Calu3 (cell line): ENCODE measurements at regions of chr5 and their contacts with region 1.

Region 1: DNA sequence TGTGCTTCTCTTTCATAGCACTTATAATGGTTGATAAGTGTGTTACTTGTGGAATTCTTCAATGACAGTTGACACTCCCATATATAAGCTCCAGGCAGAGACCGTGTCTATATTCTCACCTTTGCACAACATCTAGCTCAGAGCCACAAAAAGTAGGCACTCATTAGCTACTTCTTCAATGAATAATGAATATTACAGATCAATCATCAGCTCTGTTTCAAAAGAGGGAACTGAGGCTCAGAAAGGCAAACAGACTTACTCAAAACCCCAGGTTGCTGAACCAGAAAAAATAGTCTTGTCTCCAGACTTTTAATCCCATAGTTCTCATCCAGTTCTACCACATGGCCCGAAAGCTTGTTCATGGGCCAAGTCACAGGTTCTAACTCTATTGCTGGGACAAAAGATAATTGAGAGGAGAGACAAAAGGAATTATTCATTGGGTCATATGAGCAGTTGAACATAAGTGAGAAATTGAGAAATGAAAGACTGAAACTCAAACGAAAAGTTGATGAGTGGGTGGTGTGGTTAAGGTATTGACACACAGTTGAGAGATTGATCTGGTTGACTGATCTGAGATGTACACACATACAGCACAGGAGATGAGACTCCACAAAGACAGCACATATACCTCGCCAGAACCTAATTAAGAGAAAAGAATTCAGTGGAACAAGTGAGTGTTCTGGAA is 381.6 kb downstream of the EFNA5 start:
- DNase-seq: no peak
- H3K4me3 Mint-ChIP-seq: no peak overlapping the region
- H3K27ac Mint-ChIP-seq: peak overlapping the region; percentile 82
- H3K4me1 Mint-ChIP-seq: peaks cover 77% of the 10 kb centered on the region
- H3K27me3 Mint-ChIP-seq: no peaks in the 10 kb centered on the region
- CTCF ChIP-seq: no peak

Region 2: DNA sequence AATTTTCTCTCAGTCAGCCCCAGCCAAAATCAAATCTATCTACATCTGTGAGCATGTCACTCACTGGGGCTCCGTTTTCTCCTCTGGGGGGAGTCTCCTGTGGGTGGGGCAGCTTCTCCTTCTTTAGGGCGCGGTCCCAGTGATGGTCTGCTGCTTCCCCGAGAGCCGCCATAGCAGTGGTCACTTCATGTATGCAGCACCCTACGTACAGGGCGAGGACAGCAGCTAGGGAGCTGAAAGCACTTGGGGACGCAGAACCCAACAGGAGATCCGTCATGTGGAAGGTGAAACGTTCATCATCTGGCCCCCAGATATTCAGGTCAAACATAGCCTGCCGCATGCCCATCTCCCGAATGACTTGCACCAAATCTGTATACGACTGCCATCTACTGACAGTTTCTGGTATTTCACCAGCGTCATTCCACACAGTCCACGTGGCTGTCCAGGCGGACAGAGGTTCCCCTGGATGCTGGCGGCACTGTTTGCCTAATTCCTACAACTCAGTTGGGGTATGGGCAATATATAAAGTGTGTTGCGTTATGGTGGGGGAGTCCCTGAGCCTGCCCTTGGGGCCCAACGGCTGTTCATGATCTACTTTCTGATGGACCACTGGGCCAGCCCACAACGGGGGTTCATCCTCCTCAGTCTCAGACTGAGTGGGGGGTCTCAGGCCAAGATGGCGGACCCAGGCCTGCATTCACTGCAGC is 413.4 kb before region 1 on chr5:
- CTCF ChIA-PET with region 1: no interaction called
- intact Hi-C with region 1: loop called (anchors 10 kb)
- DNase-seq: peak; percentile 57
- H3K4me3 Mint-ChIP-seq: no peak overlapping the region
- H3K27ac Mint-ChIP-seq: no peak overlapping the region
- H3K4me1 Mint-ChIP-seq: peaks cover 27% of the 10 kb centered on the region
- H3K27me3 Mint-ChIP-seq: no peaks in the 10 kb centered on the region
- CTCF ChIP-seq: peak; percentile 50

Region 3: DNA sequence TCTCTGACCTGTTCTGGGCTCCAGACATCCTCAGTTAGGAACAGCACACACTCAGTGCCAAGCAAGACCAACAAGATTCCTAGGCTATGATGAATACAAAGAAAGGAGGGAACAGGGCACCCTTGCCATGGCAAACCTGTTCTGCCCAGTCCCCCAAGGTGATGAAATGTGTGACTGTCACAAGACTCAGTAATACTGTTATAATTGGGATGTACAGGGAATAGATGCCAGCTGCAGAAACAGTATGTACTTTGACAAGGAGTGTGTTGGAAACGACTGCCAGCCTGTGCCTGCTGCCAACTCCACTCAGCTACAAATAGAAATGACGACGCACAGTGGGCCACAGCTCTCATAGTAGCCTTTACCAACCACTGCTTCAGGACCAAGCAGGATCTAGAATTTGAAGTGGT is 71.4 kb before region 1 on chr5:
- CTCF ChIA-PET with region 1: interaction called, 3 read pairs
- intact Hi-C with region 1: loop called (anchors 5 kb)
- DNase-seq: peak; percentile 86
- H3K4me3 Mint-ChIP-seq: peak overlapping the region; percentile 44
- H3K27ac Mint-ChIP-seq: peak overlapping the region; percentile 91
- H3K4me1 Mint-ChIP-seq: peaks cover 52% of the 10 kb centered on the region
- H3K27me3 Mint-ChIP-seq: no peaks in the 10 kb centered on the region
- CTCF ChIP-seq: no peak

Region 4: GRCh38 chr5:107319901-107320300 is 30.7 kb after region 1 on chr5:
- CTCF ChIA-PET with region 1: no interaction called
- intact Hi-C with region 1: no loop called
- DNase-seq: no peak
- H3K4me3 Mint-ChIP-seq: no peak overlapping the region
- H3K27ac Mint-ChIP-seq: no peak overlapping the region
- H3K4me1 Mint-ChIP-seq: peaks cover 15% of the 10 kb centered on the region
- H3K27me3 Mint-ChIP-seq: no peaks in the 10 kb centered on the region
- CTCF ChIP-seq: no peak

Region 5: DNA sequence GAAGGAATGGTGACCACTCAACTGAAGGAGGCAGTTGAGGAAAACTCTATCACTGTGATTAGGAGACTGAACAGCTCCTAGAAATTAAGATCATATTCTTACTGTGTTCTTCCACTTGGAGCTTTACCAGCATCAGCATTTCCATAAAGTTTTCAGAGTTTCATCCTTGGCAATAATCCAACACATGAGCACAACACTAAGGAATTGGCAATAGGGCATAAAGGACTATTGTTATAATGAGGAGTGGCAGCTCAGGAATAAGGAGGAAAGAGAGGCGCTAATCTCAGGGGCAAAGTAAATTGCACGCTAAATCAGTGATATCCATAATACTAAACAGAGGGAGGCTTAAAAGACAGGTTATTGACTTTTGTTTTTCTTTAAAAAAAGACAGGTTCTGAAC is 42.7 kb after region 1 on chr5:
- CTCF ChIA-PET with region 1: no interaction called
- intact Hi-C with region 1: loop called (anchors 2 kb)
- DNase-seq: peak; percentile 38
- H3K4me3 Mint-ChIP-seq: no peak overlapping the region
- H3K27ac Mint-ChIP-seq: peak overlapping the region; percentile 84
- H3K4me1 Mint-ChIP-seq: peaks cover 23% of the 10 kb centered on the region
- H3K27me3 Mint-ChIP-seq: no peaks in the 10 kb centered on the region
- CTCF ChIP-seq: no peak

Region 6: GRCh38 chr5:107370396-107370968 is 81.3 kb after region 1 on chr5:
- CTCF ChIA-PET with region 1: no interaction called
- intact Hi-C with region 1: no loop called
- DNase-seq: no peak
- H3K4me3 Mint-ChIP-seq: no peak overlapping the region
- H3K27ac Mint-ChIP-seq: no peak overlapping the region
- H3K4me1 Mint-ChIP-seq: peaks cover 24% of the 10 kb centered on the region
- H3K27me3 Mint-ChIP-seq: no peaks in the 10 kb centered on the region
- CTCF ChIP-seq: no peak

Region 7: GRCh38 chr5:107476783-107477182 is 187.6 kb after region 1 on chr5:
- CTCF ChIA-PET with region 1: no interaction called
- intact Hi-C with region 1: loop called (anchors 5 kb)
- DNase-seq: peak; percentile 67
- H3K4me3 Mint-ChIP-seq: peak overlapping the region; percentile 35
- H3K27ac Mint-ChIP-seq: peak overlapping the region; percentile 96
- H3K4me1 Mint-ChIP-seq: peaks cover 87% of the 10 kb centered on the region
- H3K27me3 Mint-ChIP-seq: no peaks in the 10 kb centered on the region
- CTCF ChIP-seq: no peak